Astrocyte of the cerebellum (primary cell): ENCODE measurements at regions of chr19 and their contacts with region 1.

Region 1: DNA sequence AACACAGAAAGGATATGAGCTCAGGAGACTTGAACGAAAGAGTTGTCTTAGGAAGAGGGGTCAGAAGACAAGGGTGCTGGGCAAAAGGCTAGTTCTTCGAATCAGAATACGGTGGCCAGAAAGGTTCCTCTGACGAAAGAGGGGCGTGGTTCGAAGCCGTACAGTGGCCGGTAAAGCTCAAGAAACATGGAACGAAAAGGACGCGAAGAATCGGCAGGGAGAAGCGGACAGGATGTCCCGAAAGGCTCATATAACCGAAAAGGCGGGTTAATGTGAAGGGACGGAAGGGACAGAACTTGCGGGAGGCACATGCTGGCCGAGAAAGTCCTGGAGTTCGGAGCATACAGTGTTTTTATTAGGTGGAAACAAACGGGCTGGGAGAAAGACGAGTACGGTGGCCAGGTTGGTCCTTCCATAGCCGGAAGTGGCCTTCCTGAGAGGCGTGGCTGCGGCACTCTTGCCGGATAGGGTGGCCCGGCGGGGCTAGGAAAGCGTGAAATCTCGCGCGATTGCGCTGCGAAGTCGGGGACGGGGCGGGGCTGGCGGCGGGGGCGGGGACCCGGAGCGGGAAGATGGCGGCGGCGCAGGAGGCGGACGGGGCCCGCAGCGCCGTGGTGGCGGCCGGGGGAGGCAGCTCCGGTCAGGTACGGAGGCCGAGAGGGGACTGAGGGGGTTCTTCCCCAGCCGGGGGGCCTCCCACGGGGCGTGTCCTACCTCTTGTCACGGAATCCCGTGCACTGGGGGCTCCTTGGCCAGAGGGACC is at the start of gene CLPTM1:
- DNase-seq: peak; percentile 90
- H3K4me3 ChIP-seq: peak within 1 kb of the TSS; percentile 94
- CTCF ChIP-seq: no peak

Region 2: GRCh38 chr19:44737238-44738071 is 217.6 kb before region 1 on chr19:
- in situ Hi-C with region 1: loop called (anchors 10 kb)
- DNase-seq: peak; percentile 59
- H3K4me3 ChIP-seq: no peak overlapping the region
- CTCF ChIP-seq: no peak

Region 3: GRCh38 chr19:44890366-44891015 is 64.5 kb before region 1 on chr19:
- in situ Hi-C with region 1: no loop called
- DNase-seq: peak; percentile 100
- H3K4me3 ChIP-seq: peak overlapping the region; percentile 46
- CTCF ChIP-seq: no peak

Region 4: GRCh38 chr19:44912854-44913253 is 42.2 kb before region 1 on chr19:
- in situ Hi-C with region 1: loop called (anchors 5 kb)
- DNase-seq: no peak
- H3K4me3 ChIP-seq: no peak overlapping the region
- CTCF ChIP-seq: no peak